GM13976 (cell line): ENCODE measurements at regions of chr4 and their contacts with region 1.

Region 1: DNA sequence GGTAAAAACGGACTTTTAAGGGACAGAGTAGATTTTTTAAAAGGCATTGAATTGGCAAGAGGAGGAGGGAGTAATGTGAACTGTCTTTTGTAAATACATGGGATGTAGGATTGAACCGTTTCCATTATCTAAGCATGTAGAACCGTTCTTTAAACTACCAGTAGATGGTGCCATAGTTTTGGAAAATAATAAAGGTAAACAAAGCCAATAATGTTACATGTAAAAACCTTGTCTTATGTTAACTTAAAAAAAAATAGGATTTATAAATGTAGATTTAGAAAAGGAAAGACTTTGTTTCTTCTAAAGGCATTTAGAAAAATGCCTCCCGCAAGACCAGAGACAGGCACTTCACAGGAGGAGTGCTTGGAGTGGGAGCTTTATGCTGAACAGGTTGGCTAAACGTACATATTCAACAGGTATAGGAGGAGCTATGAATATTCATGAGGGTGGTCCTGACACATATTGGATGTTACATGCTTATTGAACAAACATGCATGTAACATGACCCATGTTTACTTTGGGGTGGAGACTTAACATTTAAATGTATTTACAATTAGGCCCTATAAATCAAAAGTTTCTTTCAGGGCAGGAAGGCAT is 45.5 kb upstream of the FAM241A start:
- DNase-seq: peak; percentile 55
- CTCF ChIP-seq: peak; percentile 47

Region 2: DNA sequence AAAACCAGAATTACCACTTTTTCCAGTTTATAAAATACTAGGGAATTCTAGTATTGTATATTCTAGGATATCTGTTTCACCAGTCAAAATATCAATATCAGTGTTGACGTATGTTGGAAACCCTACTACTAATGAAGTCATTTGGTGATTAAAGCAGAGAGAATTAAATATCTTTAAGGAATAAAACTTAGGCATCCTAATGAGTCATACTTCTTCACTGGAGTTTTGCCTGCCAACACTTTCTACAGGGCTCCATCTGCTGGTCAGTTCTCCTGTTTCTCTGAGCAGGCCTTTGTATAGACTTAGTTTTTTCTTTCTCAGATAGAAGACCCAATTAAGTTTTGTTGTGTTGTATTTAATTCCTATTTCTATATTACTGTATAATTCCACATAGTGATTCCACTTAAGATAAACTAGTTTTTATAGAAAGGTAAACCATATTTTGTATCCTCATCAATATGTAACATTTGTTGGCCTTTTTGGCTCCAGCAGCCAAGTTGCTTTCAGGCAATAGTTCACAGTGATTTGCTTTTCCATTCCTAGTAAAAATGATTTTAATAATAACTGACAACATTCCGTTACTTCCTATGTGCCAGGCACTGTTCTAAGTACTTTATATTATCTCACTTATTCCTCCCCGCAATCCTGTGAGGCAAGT is 135.3 kb after region 1 on chr4:
- in situ Hi-C with region 1: loop called (anchors 5 kb)
- DNase-seq: peak; percentile 58
- CTCF ChIP-seq: peak; percentile 61

Region 3: DNA sequence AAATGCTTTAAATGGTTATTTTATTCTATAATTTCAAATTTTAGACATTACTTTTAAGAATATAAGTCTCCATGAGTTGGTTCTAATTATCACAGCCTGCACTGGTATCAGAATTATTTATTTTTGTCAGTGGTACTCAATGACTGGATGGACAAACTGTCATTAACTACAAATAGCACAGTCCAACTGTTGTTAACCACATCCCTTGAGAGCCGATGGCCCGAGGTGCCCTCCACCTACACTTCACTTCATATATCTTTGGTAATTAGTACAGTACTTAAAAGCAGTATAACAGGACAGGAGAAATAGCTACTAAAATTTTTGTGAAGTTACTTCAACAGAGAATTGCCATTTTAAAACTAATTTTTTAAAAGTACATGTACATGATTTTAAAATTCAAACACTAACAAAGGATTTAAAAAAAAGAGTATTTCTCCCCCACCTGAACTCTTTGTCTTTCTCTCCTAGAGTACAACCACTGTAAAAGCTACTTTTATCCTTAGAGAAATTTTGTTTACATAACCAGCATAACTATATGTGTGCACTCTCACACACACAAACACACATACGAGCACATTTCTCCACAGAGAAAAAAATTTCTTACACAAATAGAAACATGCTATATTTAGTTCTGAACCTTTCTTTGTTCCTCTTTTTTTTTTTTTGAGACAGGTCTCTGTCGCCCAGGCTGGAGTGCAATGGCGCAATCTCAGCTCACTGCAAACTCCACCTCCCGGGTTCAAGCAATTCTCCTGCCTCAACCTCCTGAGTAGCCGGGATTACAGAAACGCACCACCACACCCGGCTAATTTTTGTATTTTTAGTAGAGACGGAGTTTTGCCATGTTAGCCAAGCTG is 179.5 kb after region 1 on chr4:
- in situ Hi-C with region 1: no loop called
- DNase-seq: no peak
- CTCF ChIP-seq: no peak

Region 4: GRCh38 chr4:112523764-112524505 is 424.1 kb after region 1 on chr4:
- in situ Hi-C with region 1: loop called (anchors 10 kb)
- DNase-seq: peak; percentile 89
- CTCF ChIP-seq: peak; percentile 82